Right lobe of liver (tissue), 6 donors: ENCODE measurements at regions of chr17 and their contacts with region 1.

Region 1: GRCh38 chr17:40615295-40615988 is 32.2 kb downstream of the SMARCE1 start:
- DNase-seq: peak; percentile 71 to 80 (median 77)
- ATAC-seq: peak; percentile 78 to 86 (median 82)
- H3K4me3 ChIP-seq: no peak overlapping the region
- H3K27ac ChIP-seq: no peak overlapping the region
- H3K4me1 ChIP-seq: peaks cover 0 to 12% (median 6%) of the 10 kb centered on the region in 4 donors
- H3K27me3 ChIP-seq: no peaks in the 10 kb centered on the region
- CTCF ChIP-seq: peak; percentile 45 to 72 (median 68)
- POLR2A ChIP-seq: no peak

Region 2: GRCh38 chr17:40791787-40792436 is 176.5 kb after region 1 on chr17:
- intact Hi-C with region 1: loop called in 1 of 2 experiments (anchors 5 kb)
- DNase-seq: no peak
- ATAC-seq: peak; percentile 56 to 71 (median 68)
- H3K4me3 ChIP-seq: no peak overlapping the region
- H3K27ac ChIP-seq: no peak overlapping the region
- H3K4me1 ChIP-seq: no peaks in the 10 kb centered on the region
- H3K27me3 ChIP-seq: no peaks in the 10 kb centered on the region
- CTCF ChIP-seq: peak; percentile 73 to 82 (median 76)
- POLR2A ChIP-seq: no peak